ENCODE measurements at regions of chr2 and their contacts with region 1.

Region 1: DNA sequence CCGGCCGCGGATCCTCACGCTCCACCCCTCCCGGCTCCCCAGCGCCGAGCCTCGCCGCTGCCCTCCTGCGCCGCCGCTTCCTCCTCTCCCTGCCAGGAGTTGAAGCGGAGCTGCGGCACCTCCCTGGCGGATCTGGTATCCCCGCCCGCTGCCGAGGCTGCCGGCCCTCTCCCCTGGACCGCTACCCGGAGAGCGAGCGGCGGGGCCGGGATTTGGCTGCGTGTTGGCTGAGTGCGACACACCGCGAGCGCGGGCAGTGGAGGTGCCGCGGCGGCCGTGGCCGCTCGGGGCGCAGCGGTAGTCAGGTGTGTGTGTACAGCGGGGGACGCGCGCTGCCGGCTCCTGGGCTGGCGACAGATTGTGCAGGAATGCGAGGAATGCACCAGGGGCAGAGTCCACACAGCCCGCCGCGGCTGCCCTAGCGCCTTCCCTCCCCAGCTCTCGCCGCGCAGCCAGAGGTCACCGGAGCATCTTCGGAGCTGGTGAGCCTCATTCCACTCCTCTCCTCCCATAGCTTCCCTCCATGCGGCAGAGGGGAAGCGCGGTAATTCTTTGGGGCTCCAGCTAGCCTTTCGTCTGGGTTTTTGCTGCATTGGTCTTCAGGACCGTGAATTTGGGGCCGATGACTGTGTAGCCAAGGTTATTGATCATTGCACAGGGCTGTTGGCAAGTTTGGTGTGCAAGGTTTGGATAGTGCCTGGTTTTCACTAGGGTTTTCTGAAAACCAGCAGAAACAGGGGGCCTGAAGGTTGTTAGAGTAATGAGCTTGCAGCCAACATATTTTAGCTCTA is 1.3 kb downstream of the PKP4 start:
- DNase-seq: peak; percentile 87
- ATAC-seq: peak; percentile 73
- H3K4me3 ChIP-seq: peak overlapping the region; percentile 76
- H3K27ac ChIP-seq: peak overlapping the region; percentile 30
- H3K4me1 ChIP-seq: peaks cover 33% of the 10 kb centered on the region
- H3K27me3 ChIP-seq: no peaks in the 10 kb centered on the region
- CTCF ChIP-seq: peak; percentile 30; the same call in 1 of the 2 replicates

Region 2: DNA sequence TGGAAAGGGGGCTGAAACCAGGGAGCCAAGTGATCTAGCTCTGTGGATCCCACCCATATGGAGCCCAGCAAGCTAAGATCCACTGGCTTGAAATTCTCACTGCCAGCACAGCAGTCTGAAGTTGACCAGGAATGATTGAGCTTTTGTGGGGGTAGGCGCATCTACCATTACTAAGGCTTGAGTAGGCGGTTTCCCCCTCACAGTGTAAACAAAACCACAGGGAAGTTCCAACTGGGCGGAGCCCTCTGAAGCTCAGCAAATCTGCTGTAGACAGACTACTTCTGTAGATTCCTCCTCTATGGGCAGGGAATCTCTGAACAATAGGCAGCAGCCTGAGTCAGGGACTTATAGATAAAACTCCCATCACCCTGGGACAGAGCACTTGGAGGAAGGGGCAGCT is 98.2 kb before region 1 on chr2:
- CTCF ChIA-PET with region 1: no interaction called
- POLR2A ChIA-PET with region 1: interaction called, 13 read pairs
- intact Hi-C with region 1: no loop called
- DNase-seq: peak; percentile 92
- ATAC-seq: peak; percentile 75
- H3K4me3 ChIP-seq: no peak overlapping the region
- H3K27ac ChIP-seq: no peak overlapping the region
- H3K4me1 ChIP-seq: peaks cover 27% of the 10 kb centered on the region
- H3K27me3 ChIP-seq: no peaks in the 10 kb centered on the region
- CTCF ChIP-seq: no peak

Region 3: DNA sequence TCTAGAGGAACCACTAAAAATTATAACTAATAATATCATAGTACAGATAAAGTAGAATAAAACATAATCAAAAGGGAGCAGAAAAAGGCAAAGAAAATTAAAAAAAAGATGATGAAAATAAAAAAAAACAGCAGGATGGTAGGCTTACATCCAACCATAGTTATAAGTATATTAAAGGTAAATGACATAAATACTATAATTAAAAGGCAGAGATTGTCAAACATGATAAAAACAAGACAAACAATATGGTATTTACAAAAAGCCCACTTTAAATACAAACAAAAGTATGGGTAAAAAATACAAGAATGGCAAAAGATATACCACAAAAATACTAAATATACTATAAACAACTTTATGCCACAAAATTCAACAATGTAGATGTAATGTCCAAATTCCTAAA is 25.9 kb before region 1 on chr2:
- CTCF ChIA-PET with region 1: no interaction called
- POLR2A ChIA-PET with region 1: no interaction called
- intact Hi-C with region 1: no loop called
- DNase-seq: no peak
- ATAC-seq: no peak
- H3K4me3 ChIP-seq: no peak overlapping the region
- H3K27ac ChIP-seq: no peak overlapping the region
- H3K4me1 ChIP-seq: no peaks in the 10 kb centered on the region
- H3K27me3 ChIP-seq: no peaks in the 10 kb centered on the region
- CTCF ChIP-seq: no peak

Region 4: GRCh38 chr2:158497486-158497885 is 39.5 kb after region 1 on chr2:
- CTCF ChIA-PET with region 1: no interaction called
- POLR2A ChIA-PET with region 1: no interaction called
- intact Hi-C with region 1: loop called (anchors 1 kb)
- DNase-seq: peak; percentile 78
- ATAC-seq: peak; percentile 93
- H3K4me3 ChIP-seq: no peak overlapping the region
- H3K27ac ChIP-seq: no peak overlapping the region; the same call in 1 of the 2 replicates
- H3K4me1 ChIP-seq: peaks cover 16% of the 10 kb centered on the region
- H3K27me3 ChIP-seq: no peaks in the 10 kb centered on the region
- CTCF ChIP-seq: no peak

Region 5: DNA sequence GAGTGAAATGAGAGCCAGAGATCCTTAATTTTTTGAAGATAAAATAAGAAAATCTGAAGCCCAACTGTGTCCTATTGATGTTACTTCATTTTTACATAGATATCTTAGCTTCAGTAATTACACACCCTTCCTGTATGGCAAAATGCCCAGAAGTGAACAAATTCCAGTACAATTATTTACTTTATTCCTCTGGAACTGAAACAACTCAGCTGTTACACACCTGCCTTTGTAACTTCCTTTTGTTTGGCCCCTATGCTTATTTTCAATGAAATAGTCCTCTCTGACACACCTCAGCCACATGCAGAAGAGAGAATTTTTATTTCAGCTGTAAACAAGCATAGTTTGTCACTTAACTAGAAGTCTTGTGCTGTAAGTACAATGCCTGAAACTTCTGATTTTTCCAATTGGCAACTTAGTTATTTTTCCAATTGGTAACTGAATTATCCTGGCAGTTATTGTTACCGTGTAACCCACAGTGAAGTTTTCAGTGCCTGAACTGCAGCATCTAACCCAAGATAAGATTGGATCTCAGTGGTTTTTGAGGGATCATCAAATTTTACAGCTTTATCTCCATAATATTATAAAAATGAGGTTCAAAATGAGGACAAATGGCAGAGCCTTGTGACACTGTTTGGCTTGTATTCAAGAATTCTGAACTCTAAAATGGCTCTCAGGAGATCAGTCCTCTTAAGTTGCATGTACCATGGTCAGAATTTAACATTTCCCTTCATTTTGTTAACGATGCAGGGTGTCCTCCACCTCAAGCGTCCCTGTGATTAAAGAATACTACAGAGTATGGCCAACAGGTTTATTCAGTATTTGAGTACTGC is 81.4 kb after region 1 on chr2:
- CTCF ChIA-PET with region 1: interaction called, 3 read pairs
- POLR2A ChIA-PET with region 1: no interaction called
- intact Hi-C with region 1: loop called (anchors 1 kb)
- DNase-seq: peak; percentile 96
- ATAC-seq: peak; percentile 89
- H3K4me3 ChIP-seq: no peak overlapping the region
- H3K27ac ChIP-seq: peak overlapping the region; percentile 49
- H3K4me1 ChIP-seq: peaks cover 17% of the 10 kb centered on the region
- H3K27me3 ChIP-seq: no peaks in the 10 kb centered on the region
- CTCF ChIP-seq: no peak

Region 6: DNA sequence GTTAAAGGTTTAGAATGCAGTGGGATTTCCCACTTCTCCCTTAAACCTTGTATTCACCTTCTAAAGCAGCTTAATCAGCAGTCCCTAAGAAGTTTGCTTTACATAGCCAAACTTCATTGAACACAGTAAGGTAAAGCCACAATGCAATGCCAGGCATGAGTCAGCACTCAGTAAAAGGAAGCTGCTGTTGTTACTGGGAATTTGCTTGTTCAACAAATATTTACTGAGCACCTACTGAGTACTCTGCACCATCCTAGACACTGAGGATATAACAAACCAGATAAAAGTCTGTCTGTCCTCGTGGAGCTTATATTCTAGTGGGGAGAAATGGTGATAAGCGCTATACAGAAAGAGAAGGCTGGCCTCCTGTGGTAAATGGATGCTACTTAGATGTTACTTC is 161.5 kb after region 1 on chr2:
- CTCF ChIA-PET with region 1: interaction called, 3 read pairs
- POLR2A ChIA-PET with region 1: no interaction called
- intact Hi-C with region 1: loop called (anchors 2 kb)
- DNase-seq: peak; percentile 75
- ATAC-seq: peak; percentile 98
- H3K4me3 ChIP-seq: no peak overlapping the region
- H3K27ac ChIP-seq: peak overlapping the region; percentile 56
- H3K4me1 ChIP-seq: peaks cover 12% of the 10 kb centered on the region
- H3K27me3 ChIP-seq: no peaks in the 10 kb centered on the region
- CTCF ChIP-seq: no peak

Region 7: GRCh38 chr2:158667586-158667985 is 209.6 kb after region 1 on chr2:
- CTCF ChIA-PET with region 1: no interaction called
- POLR2A ChIA-PET with region 1: interaction called, 10 read pairs
- intact Hi-C with region 1: no loop called
- DNase-seq: peak; percentile 66
- ATAC-seq: peak; percentile 82
- H3K4me3 ChIP-seq: no peak overlapping the region
- H3K27ac ChIP-seq: peak overlapping the region; percentile 16; the same call in 1 of the 2 replicates
- H3K4me1 ChIP-seq: peaks cover 10% of the 10 kb centered on the region; the same call in 1 of the 2 replicates
- H3K27me3 ChIP-seq: no peaks in the 10 kb centered on the region
- CTCF ChIP-seq: no peak

Region 8: DNA sequence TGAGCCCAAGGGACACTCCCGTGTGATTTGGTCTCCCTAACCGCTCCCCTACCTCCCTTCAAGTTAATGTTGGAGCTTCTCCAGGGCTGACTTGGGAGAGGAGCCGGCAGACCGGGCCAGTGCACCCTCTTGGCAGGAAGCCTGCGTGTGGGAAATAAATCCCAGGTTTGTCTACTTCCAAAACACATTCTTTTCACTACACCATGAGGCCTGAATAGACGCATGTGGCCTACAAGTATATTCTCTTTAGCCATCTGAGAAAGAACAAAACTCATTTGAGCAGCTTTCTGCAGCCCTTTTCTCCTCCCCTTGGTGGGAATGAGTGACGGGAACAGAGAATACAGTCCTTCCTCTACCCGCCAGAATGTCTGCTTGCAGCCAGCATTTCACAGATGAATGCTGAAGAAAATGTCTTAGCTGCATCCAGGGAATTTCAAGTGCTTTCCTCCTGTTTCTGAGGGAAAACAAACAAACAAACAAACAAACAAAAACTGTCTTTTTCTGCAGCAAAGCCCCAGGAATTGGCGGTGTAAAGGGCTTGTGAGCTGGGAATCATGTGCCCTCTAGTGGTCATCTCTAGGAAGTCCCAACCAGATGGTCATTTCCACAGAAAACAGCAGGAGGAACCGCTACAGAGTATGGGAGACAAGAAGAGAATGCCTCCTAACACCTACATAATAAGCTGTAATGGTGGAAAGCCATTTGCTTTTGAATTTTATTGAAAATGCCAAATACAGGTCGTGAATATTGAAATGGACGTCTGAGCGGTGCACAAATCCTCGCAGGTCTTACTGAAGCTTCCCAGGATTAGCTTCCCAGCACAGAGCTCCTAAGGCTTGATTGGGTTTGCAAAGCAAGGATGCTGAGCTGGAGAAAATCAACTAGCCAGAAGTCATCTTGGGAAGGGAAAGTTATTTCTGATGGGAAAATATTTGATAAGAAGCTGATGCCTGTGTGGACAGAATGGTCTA is 295.9 kb after region 1 on chr2:
- CTCF ChIA-PET with region 1: no interaction called
- POLR2A ChIA-PET with region 1: no interaction called
- intact Hi-C with region 1: loop called (anchors 2 kb)
- DNase-seq: peak; percentile 73
- ATAC-seq: peak; percentile 88
- H3K4me3 ChIP-seq: peak overlapping the region; percentile 32; the same call in 1 of the 2 replicates
- H3K27ac ChIP-seq: no peak overlapping the region
- H3K4me1 ChIP-seq: no peaks in the 10 kb centered on the region
- H3K27me3 ChIP-seq: no peaks in the 10 kb centered on the region
- CTCF ChIP-seq: peak; percentile 97

Region 9: GRCh38 chr2:158926478-158926948 is 468.5 kb after region 1 on chr2:
- CTCF ChIA-PET with region 1: no interaction called
- POLR2A ChIA-PET with region 1: no interaction called
- intact Hi-C with region 1: no loop called
- DNase-seq: peak; percentile 79
- ATAC-seq: peak; percentile 66
- H3K4me3 ChIP-seq: peak overlapping the region; percentile 27; the same call in 1 of the 2 replicates
- H3K27ac ChIP-seq: peak overlapping the region; percentile 38
- H3K4me1 ChIP-seq: peaks cover 45% of the 10 kb centered on the region
- H3K27me3 ChIP-seq: no peaks in the 10 kb centered on the region
- CTCF ChIP-seq: no peak